Activated CD8-positive, alpha-beta T cell treated with anti-CD3 and anti-CD28 coated beads for 36 hours (primary cell): ENCODE measurements at regions of chr3 and their contacts with region 1.

Region 1: GRCh38 chr3:114393367-114394072 is 99.7 kb downstream of the TIGIT start:
- DNase-seq: no peak
- ATAC-seq: peak; percentile 70
- H3K4me3 Mint-ChIP-seq: no peak overlapping the region
- H3K27ac Mint-ChIP-seq: no peak overlapping the region
- H3K4me1 Mint-ChIP-seq: peaks cover 35% of the 10 kb centered on the region
- H3K27me3 Mint-ChIP-seq: no peaks in the 10 kb centered on the region
- CTCF ChIP-seq: no peak

Region 2: DNA sequence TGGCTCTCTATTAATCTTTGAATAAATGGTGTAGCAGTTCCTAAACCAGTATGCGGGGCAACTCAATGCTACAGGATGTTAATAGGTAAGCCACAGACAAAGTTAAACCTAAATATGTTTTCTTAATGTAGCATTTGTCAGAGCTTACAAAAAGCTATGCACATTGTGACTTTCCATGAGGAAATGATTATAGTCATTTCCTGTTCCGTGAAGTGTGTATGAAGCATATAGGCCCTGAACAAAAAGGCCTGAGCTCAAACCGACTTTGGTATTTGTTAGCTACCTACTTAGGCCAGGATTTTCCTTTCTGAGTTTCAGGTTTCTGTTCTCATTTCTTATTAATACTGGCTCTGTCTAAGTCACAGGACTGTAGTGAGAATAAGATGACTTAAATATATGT is 170.4 kb before region 1 on chr3:
- CTCF ChIA-PET with region 1: no interaction called
- POLR2A ChIA-PET with region 1: no interaction called
- intact Hi-C with region 1: no loop called
- DNase-seq: peak; percentile 57
- ATAC-seq: peak; percentile 68
- H3K4me3 Mint-ChIP-seq: peak overlapping the region; percentile 4
- H3K27ac Mint-ChIP-seq: peak overlapping the region; percentile 99
- H3K4me1 Mint-ChIP-seq: peaks cover 88% of the 10 kb centered on the region
- H3K27me3 Mint-ChIP-seq: no peaks in the 10 kb centered on the region
- CTCF ChIP-seq: no peak

Region 3: DNA sequence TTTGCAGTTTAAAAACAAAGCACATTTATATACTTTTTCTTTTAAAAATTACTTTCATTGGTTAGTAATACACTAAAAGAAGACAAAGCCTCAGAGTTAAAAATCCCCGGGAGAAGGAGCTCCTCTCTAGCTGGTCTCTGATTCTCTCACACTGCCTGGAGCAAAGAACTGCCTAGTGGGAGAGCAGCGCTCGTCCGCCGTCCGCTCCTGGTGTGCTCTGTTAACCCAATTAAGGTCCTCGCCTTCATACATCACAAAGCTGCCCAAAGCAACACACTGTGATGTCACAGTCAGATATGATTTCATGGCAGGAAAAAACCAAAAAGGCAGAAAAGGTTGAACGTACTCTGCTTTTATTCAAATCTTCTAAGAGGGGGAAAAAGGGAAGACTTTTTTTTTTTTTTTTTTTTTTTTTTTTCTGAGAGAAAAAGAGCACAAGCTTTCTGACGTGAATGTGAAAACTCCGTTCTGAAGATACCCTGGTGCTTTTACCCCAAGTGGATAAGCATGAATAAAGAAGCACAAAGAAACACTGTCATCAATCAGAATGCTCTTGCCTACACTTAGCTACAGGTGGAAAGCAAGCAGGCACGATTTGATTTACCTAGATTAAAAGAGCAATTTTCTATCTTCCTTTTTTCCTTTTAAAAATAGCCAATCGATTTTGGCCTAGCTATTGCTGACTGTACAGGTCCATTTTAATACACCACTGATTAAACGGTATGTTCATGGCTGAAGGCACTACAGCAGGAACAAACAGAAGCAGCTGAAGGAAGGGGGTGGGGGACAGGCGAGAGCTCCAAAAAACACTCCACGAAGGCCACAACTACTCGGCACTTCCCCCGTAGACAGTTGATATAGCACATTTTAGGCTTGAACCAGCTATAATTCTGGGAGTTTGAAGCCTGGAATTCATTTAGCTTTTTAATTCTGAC is 15.5 kb after region 1 on chr3:
- CTCF ChIA-PET with region 1: interaction called, 10 read pairs
- POLR2A ChIA-PET with region 1: interaction called, 6 read pairs
- intact Hi-C with region 1: no loop called
- DNase-seq: no peak
- ATAC-seq: no peak
- H3K4me3 Mint-ChIP-seq: no peak overlapping the region
- H3K27ac Mint-ChIP-seq: no peak overlapping the region
- H3K4me1 Mint-ChIP-seq: peaks cover 36% of the 10 kb centered on the region
- H3K27me3 Mint-ChIP-seq: no peaks in the 10 kb centered on the region
- CTCF ChIP-seq: no peak

Region 4: GRCh38 chr3:114687151-114687550 is 293.6 kb after region 1 on chr3:
- CTCF ChIA-PET with region 1: no interaction called
- POLR2A ChIA-PET with region 1: no interaction called
- intact Hi-C with region 1: no loop called
- DNase-seq: no peak
- ATAC-seq: no peak
- H3K4me3 Mint-ChIP-seq: no peak overlapping the region
- H3K27ac Mint-ChIP-seq: no peak overlapping the region
- H3K4me1 Mint-ChIP-seq: peaks cover 18% of the 10 kb centered on the region
- H3K27me3 Mint-ChIP-seq: no peaks in the 10 kb centered on the region
- CTCF ChIP-seq: no peak